Endothelial cell of umbilical vein (primary cell): ENCODE measurements at regions of chr6 and their contacts with region 1.

Region 1: GRCh38 chr6:88982720-88983119 is 19.3 kb upstream of the RNGTT start:
- DNase-seq: peak; percentile 70
- H3K4me3 ChIP-seq: no peak overlapping the region
- H3K27ac ChIP-seq: no peak overlapping the region
- H3K4me1 ChIP-seq: no peaks in the 10 kb centered on the region
- H3K27me3 ChIP-seq: peaks cover 0 to 1% of the 10 kb centered on the region in 2 experiments
- CTCF ChIP-seq: peak; percentile 34 to 48
- POLR2A ChIP-seq: no peak

Region 2: DNA sequence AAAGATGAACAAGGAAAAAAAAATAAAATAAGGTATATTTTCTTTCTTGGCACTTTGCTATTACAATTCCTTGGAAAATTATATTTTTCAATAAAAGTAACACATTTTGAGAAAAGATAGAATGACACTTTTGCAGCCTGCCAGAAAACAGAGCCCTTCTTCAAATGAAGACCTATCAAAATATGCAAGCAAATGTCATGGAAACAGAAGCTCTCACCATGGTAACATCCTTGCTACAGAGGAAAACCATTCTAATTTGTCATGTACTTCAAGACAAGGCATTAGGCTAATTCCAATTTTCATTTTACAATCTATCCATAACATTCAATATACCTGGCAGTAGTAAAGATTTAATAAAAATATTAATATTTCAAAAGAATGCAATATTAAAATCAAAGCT is 197.2 kb before region 1 on chr6:
- CTCF ChIA-PET with region 1: no interaction called
- POLR2A ChIA-PET with region 1: no interaction called
- dilution Hi-C with region 1: no loop called
- intact Hi-C with region 1: no loop called
- DNase-seq: no peak
- H3K4me3 ChIP-seq: no peak overlapping the region
- H3K27ac ChIP-seq: no peak overlapping the region
- H3K4me1 ChIP-seq: no peaks in the 10 kb centered on the region
- H3K27me3 ChIP-seq: no peaks in the 10 kb centered on the region
- CTCF ChIP-seq: no peak
- POLR2A ChIP-seq: no peak

Region 3: DNA sequence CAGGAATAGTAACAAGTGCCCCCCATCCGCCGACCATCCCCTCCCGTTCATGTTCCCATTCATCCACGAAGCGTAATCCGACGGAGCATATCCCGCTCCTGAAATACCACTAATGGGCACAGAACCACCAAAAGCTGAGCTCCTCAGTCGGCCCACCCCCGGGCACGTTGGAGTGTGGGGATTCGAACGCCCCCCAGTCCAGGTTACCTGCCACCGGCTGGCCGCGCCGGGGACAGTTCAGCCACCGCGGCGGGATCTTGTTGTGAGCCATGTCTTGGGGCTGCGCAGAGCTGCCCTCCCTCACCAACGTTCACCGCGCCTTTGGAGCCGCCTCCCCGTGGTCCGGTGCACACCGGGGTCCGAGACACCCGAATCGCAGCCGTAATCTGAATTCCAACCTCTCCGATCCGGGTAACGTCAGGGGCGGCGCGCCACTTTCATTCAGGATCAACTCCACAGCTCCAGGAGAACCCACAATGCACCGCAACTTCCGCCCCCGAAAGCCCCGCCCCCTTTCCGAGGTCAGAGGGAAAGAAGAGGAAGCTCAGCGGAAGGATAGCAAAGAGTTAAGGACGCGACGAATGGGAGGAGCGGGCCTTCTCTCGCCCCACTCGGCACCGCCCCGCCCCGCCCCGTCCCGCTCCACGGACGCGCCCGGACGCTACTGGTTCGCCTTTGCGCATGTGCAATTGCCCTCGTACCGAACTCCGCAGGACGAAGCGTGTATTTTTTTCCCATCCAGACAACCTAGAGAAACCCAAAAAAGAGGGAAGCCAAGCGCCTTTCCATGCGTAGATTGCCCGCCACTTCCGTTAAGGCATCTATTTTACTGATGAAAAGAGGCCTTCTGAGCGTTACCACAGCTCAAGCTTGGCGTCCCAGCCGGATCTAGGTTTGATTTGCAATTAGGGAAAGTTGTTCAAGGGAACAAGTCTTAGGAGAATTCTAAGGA is 19.3 kb before region 1 on chr6 and contains the start of gene RNGTT:
- CTCF ChIA-PET with region 1: interaction called, 12 read pairs
- POLR2A ChIA-PET with region 1: no interaction called
- dilution Hi-C with region 1: no loop called
- intact Hi-C with region 1: loop called (anchors 1 kb)
- DNase-seq: peak; percentile 98
- H3K4me3 ChIP-seq: peak within 1 kb of the TSS; percentile 93 to 99 (median 96)
- H3K27ac ChIP-seq: peak within 1 kb of the TSS; percentile 71
- H3K4me1 ChIP-seq: peaks cover 12% of the 10 kb centered on the region
- H3K27me3 ChIP-seq: no peaks in the 10 kb centered on the region
- CTCF ChIP-seq: no peak
- POLR2A ChIP-seq: peak; percentile 50
- total RNA-seq, gene RNGTT: 13.1 and 13.5 TPM in 2 replicates

Region 4: GRCh38 chr6:89066940-89067646 is 84.4 kb after region 1 on chr6:
- CTCF ChIA-PET with region 1: interaction called, 10 read pairs
- POLR2A ChIA-PET with region 1: no interaction called
- dilution Hi-C with region 1: no loop called
- intact Hi-C with region 1: no loop called
- DNase-seq: no peak
- H3K4me3 ChIP-seq: no peak overlapping the region
- H3K27ac ChIP-seq: no peak overlapping the region
- H3K4me1 ChIP-seq: no peaks in the 10 kb centered on the region
- H3K27me3 ChIP-seq: peaks cover 1 to 9% of the 10 kb centered on the region in 2 experiments
- CTCF ChIP-seq: no peak
- POLR2A ChIP-seq: no peak

Region 5: GRCh38 chr6:89122625-89123024 is 139.9 kb after region 1 on chr6:
- CTCF ChIA-PET with region 1: interaction called, 17 read pairs
- POLR2A ChIA-PET with region 1: no interaction called
- dilution Hi-C with region 1: no loop called
- intact Hi-C with region 1: loop called (anchors 2 kb)
- DNase-seq: peak; percentile 52
- H3K4me3 ChIP-seq: no peak overlapping the region
- H3K27ac ChIP-seq: no peak overlapping the region
- H3K4me1 ChIP-seq: peaks cover 2% of the 10 kb centered on the region
- H3K27me3 ChIP-seq: peaks cover 6 to 18% of the 10 kb centered on the region in 2 experiments
- CTCF ChIP-seq: peak in 1 of 2 donors; percentile 31
- POLR2A ChIP-seq: no peak

Region 6: DNA sequence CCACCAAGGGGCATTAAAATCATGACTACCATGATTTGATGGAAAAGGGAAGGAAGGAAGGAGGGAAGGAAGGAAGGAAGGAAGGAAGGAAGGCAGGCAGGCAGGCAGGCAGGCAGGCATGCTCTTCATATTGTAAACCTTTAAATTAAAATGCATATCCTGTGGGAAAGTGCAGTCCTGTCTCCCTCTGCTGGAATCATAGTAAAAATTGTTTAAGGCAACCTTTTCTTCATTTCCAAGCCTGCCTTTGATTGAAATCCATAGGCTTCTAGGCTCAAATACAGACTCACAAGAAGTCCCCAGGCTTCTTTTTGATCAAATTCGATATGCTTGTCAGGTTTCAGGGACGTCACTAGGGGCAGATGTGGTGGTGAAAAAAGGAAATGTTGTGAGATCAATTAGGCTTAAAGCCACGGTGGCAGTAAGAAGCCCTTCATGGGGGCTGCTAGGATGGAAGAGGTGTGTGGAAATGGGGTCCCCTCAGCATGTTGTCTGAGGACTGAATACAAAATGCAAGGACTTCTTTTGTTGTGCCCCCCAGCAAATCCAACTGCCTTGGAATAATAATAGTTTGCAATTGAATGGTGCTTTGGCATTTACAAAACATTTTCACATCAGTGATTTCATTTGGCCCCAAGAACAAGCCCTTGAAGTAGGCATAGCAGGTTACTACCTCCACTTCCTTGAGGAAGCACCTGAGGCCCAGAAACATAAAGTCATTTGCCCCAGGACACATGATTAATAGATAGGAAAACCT is 260.0 kb after region 1 on chr6:
- CTCF ChIA-PET with region 1: interaction called, 196 read pairs
- POLR2A ChIA-PET with region 1: no interaction called
- dilution Hi-C with region 1: no loop called
- intact Hi-C with region 1: loop called (anchors 1 kb)
- DNase-seq: peak; percentile 60
- H3K4me3 ChIP-seq: no peak overlapping the region
- H3K27ac ChIP-seq: no peak overlapping the region
- H3K4me1 ChIP-seq: no peaks in the 10 kb centered on the region
- H3K27me3 ChIP-seq: peaks cover 16 to 23% of the 10 kb centered on the region in 2 experiments
- CTCF ChIP-seq: peak; percentile 36 to 43
- POLR2A ChIP-seq: no peak

Region 7: DNA sequence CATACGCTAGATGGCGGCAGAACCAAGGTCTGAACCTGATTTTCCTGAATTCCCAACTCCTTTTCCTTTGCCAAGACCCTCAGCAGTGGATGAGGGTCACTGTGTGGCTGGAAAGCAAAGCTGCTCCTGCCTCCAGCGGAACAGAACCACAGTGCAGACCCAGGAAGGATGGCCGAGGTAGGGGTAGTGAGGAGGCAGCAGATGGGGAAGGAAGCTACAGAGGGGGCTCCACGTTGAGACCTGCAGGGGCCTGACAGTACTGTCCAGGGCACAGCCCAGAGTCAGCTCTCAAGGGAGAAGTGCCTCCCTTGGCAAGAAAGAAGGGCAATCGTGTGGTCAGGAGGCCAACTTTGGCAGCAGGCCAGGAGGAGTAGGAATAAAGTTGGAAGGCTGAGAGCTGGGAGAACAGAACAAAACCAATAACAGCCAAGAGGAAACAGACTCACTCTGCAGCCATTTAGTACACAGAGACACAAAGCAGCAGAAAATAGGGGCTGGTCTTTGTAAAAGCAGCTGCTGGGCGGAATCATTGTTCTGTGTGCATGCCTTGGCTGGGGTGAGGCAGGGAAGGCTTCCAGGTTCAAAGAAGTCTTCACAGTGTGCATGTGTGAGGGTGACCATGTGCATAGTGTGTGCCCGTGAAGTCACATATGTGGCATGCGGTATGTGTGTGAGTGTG is 329.3 kb after region 1 on chr6:
- CTCF ChIA-PET with region 1: interaction called, 15 read pairs
- POLR2A ChIA-PET with region 1: no interaction called
- dilution Hi-C with region 1: no loop called
- intact Hi-C with region 1: loop called (anchors 2 kb)
- DNase-seq: peak; percentile 95
- H3K4me3 ChIP-seq: no peak overlapping the region
- H3K27ac ChIP-seq: peak overlapping the region; percentile 67
- H3K4me1 ChIP-seq: peaks cover 22% of the 10 kb centered on the region
- H3K27me3 ChIP-seq: no peaks in the 10 kb centered on the region
- CTCF ChIP-seq: peak; percentile 51 to 81
- POLR2A ChIP-seq: no peak

Region 8: DNA sequence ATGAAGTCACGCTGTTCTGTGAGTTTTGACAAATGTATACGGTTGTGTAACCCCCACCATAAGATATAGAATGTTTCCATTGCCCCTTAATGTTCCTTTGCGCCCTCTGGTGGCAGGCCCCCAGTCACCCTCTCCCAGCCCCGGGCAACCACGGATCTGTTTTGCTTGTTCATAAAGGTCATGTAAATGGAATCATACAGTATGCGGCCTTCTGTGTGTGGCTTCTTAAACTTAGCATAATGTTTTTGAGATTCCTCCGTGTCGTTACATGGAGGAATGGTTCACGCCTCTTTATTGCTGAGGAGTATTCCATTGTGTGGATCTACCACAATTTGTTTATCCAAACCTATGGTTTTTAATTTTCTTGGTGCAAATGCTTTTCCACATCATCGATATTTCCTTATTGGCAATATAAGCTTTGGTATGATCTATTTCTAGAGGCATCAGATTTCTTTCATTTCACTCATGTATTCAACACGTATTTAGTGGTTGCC is 627.5 kb after region 1 on chr6:
- CTCF ChIA-PET with region 1: interaction called, 23 read pairs
- POLR2A ChIA-PET with region 1: no interaction called
- dilution Hi-C with region 1: no loop called
- intact Hi-C with region 1: loop called (anchors 2 kb)
- DNase-seq: peak; percentile 54
- H3K4me3 ChIP-seq: no peak overlapping the region
- H3K27ac ChIP-seq: no peak overlapping the region
- H3K4me1 ChIP-seq: peaks cover 6% of the 10 kb centered on the region
- H3K27me3 ChIP-seq: no peaks in the 10 kb centered on the region
- CTCF ChIP-seq: peak; percentile 77 to 82
- POLR2A ChIP-seq: no peak